Ascending aorta (tissue), 2 donors: ENCODE measurements at regions of chr19 and their contacts with region 1.

Region 1: GRCh38 chr19:43463381-43464136 is 1.8 kb downstream of the LYPD3 start:
- DNase-seq: peak; percentile 90 to 98
- H3K4me3 ChIP-seq: peak overlapping the region; percentile 58 to 69
- H3K27ac ChIP-seq: peak overlapping the region; percentile 73 to 88
- H3K4me1 ChIP-seq: peaks cover 0 to 8% of the 10 kb centered on the region in 2 donors
- H3K27me3 ChIP-seq: no peaks in the 10 kb centered on the region
- CTCF ChIP-seq: no peak

Region 2: GRCh38 chr19:43474986-43475705 is 11.6 kb after region 1 on chr19:
- intact Hi-C with region 1: loop called (anchors 1 kb)
- DNase-seq: peak; percentile 75 to 96
- H3K4me3 ChIP-seq: peak overlapping the region; percentile 46 to 60
- H3K27ac ChIP-seq: peak overlapping the region; percentile 68 to 76
- H3K4me1 ChIP-seq: peaks cover 0 to 7% of the 10 kb centered on the region in 2 donors
- H3K27me3 ChIP-seq: no peaks in the 10 kb centered on the region
- CTCF ChIP-seq: no peak

Region 3: DNA sequence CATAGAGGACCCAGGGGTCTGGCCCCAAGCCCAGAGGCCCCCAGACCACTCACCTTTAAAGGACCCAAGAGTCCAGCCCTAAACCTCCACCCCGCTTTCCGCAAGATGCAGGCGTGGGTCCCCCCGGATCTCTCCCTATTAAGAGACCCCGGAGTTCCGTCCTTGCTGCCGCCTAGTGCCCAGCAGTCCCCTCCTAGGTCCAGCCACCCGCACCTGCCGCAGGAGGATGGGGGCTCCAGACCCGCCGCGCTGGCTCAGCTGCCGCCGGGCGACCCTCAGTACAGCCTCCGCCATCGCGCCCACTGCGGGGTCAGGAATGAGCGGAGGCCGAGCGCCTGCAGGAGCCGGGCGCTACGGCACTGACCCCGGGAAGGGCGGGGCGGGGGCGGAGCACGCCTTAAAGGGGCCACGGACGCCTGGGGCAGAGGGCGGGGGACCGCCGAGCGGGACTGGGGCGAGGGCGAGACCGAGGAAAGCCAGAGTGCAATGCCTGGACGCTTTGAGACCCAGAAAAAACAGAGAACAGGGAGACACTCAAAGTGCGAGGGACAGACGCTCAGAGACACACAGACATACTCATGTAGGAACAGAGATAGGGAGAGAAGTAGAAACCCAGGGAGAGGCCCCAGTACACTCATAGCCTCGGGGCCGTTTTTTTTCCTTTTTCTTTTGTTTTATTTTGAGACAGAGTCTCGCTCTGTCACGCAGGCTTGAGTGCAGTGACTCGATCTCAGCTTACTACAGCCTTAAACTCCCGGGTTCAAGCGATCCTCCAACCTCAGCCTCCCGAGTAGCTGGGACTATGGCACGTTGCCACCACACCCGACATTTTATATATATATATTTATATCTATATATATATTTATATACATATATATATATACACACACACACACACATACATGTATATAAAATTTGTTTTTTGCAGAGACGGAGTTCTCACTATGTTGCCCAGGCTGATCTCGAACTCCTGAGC is 63.6 kb after region 1 on chr19 and contains the start of gene ETHE1:
- intact Hi-C with region 1: loop called (anchors 1 kb)
- DNase-seq: peak; percentile 40 to 92
- H3K4me3 ChIP-seq: peak within 1 kb of the TSS; percentile 76 to 91
- H3K27ac ChIP-seq: peak within 1 kb of the TSS; percentile 82 to 87
- H3K4me1 ChIP-seq: peaks cover 12 to 22% of the 10 kb centered on the region in 2 donors
- H3K27me3 ChIP-seq: no peaks in the 10 kb centered on the region
- CTCF ChIP-seq: no peak
- total RNA-seq, gene ETHE1: 118 TPM

Region 4: DNA sequence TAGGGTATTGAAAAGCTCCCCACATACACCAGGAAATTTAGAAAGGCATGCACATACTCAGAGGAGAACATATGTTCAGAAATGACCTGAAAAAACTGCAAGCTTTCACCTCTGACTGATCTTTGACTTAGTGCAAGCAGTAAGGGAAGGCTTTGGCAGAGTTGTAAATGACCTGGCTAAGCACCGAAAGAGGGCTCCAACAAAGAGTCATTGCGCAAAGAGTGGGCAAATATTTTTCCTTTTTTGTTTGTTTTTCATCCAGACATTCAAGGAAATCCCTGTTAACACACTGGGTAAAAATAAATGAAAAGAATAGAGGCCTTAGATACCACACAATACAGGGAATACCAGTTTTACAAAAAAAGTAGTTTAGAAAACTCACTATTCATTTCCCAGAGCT is 790.9 kb after region 1 on chr19:
- intact Hi-C with region 1: no loop called
- DNase-seq: no peak
- H3K4me3 ChIP-seq: no peak overlapping the region
- H3K27ac ChIP-seq: no peak overlapping the region
- H3K4me1 ChIP-seq: no peaks in the 10 kb centered on the region
- H3K27me3 ChIP-seq: no peaks in the 10 kb centered on the region
- CTCF ChIP-seq: no peak